H1 (cell line): ENCODE measurements at regions of chr1 and their contacts with region 1.

Region 1: GRCh38 chr1:173507205-173507846 is 30.2 kb downstream of the PRDX6 start:
- DNase-seq: no peak
- H3K4me3 ChIP-seq: no peak overlapping the region
- H3K27ac ChIP-seq: peak overlapping the region; percentile 35; the same call in 1 of the 2 replicates
- H3K4me1 ChIP-seq: peaks cover 5 to 9% (median 7%) of the 10 kb centered on the region in 4 experiments; a peak in 5 of 7 replicates
- H3K27me3 ChIP-seq: no peaks in the 10 kb centered on the region
- CTCF ChIP-seq: no peak
- EP300 ChIP-seq: no peak
- POLR2A ChIP-seq: no peak
- RAD21 ChIP-seq: no peak

Region 2: GRCh38 chr1:173489149-173489934 is 18.0 kb before region 1 on chr1:
- CTCF ChIA-PET with region 1: interaction called, 16 read pairs
- POLR2A ChIA-PET with region 1: interaction called, 18 read pairs
- DNase-seq: no peak
- H3K4me3 ChIP-seq: no peak overlapping the region
- H3K27ac ChIP-seq: no peak overlapping the region
- H3K4me1 ChIP-seq: peaks cover 0 to 3% (median 1%) of the 10 kb centered on the region in 4 experiments; a peak in 2 of 7 replicates
- H3K27me3 ChIP-seq: no peaks in the 10 kb centered on the region
- CTCF ChIP-seq: peak in 1 of 3 experiments; percentile 45; a peak in 2 of 4 replicates
- EP300 ChIP-seq: no peak
- POLR2A ChIP-seq: peak in 1 of 2 experiments; percentile 89; a peak in 2 of 3 replicates
- RAD21 ChIP-seq: peak; percentile 55 to 57

Region 3: DNA sequence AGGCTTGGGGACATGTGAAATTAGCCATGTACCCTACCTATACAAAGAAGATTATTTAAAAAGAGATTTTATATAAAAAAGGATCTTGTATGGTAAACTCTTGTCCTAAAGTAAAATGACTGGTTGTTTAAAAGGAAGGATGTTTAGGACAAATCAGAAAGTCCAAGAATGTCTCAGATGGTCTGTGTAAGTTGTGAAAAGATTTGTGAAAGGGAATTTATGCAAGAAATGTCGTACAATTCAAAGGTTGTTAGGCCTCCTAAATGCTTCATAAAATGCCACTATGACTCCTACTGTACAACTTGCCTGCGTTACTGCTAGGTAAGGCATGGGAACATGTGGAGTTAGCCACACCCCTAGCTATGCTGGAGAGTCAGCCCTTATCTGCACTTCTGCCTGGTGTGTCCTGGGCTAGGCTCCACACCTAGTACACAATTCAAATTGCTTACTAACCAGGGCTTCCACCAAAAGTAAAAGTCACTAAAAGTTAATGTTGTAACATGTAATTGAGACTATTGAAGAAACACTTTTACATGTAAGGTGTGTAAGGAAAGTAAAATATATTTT is 10.5 kb before region 1 on chr1:
- CTCF ChIA-PET with region 1: interaction called, 10 read pairs
- POLR2A ChIA-PET with region 1: interaction called, 18 read pairs
- DNase-seq: no peak
- H3K4me3 ChIP-seq: no peak overlapping the region
- H3K27ac ChIP-seq: no peak overlapping the region
- H3K4me1 ChIP-seq: no peaks in the 10 kb centered on the region
- H3K27me3 ChIP-seq: no peaks in the 10 kb centered on the region
- CTCF ChIP-seq: no peak
- EP300 ChIP-seq: no peak
- POLR2A ChIP-seq: no peak
- RAD21 ChIP-seq: no peak

Region 4: DNA sequence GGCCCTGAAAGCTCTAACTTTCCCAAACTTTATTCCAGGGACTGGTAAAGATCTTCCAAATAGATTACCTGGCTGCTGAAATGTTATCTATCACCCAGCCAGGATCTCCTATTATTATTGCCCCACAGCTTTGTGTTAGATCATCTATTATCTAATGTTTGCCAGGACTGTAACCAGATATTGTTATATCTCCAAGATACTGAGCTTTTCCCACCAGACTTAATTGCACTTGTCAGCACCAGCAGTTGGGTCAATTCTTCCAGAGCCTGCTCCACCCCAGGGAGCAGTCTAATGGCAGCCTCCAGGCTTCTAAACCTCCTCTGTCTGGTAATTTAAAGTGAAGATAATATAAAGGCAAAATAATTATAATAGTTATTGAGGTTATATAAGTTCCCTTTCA is 28.9 kb after region 1 on chr1:
- CTCF ChIA-PET with region 1: interaction called, 12 read pairs
- POLR2A ChIA-PET with region 1: no interaction called
- DNase-seq: no peak
- H3K4me3 ChIP-seq: no peak overlapping the region
- H3K27ac ChIP-seq: no peak overlapping the region
- H3K4me1 ChIP-seq: peaks cover 0 to 3% (median 2%) of the 10 kb centered on the region in 4 experiments; a peak in 5 of 7 replicates
- H3K27me3 ChIP-seq: no peaks in the 10 kb centered on the region
- CTCF ChIP-seq: no peak
- EP300 ChIP-seq: no peak
- POLR2A ChIP-seq: no peak
- RAD21 ChIP-seq: no peak